ENCODE measurements at regions of chr1 and their contacts with region 1.

Region 1: GRCh38 chr1:92858564-92859399 is 26.9 kb downstream of the RPL5 start:
- DNase-seq: peak; percentile 57
- H3K4me3 Mint-ChIP-seq: no peak overlapping the region
- H3K27ac Mint-ChIP-seq: no peak overlapping the region
- H3K4me1 Mint-ChIP-seq: no peaks in the 10 kb centered on the region
- H3K27me3 Mint-ChIP-seq: no peaks in the 10 kb centered on the region
- CTCF ChIP-seq: peak; percentile 82

Region 2: GRCh38 chr1:92960395-92961130 is 101.8 kb after region 1 on chr1:
- CTCF ChIA-PET with region 1: interaction called, 7 read pairs
- intact Hi-C with region 1: loop called (anchors 1 kb)
- DNase-seq: peak; percentile 64
- H3K4me3 Mint-ChIP-seq: peak overlapping the region; percentile 70
- H3K27ac Mint-ChIP-seq: peak overlapping the region; percentile 31
- H3K4me1 Mint-ChIP-seq: peaks cover 8% of the 10 kb centered on the region
- H3K27me3 Mint-ChIP-seq: no peaks in the 10 kb centered on the region
- CTCF ChIP-seq: peak; percentile 47

Region 3: GRCh38 chr1:92994105-92994712 is 135.4 kb after region 1 on chr1:
- CTCF ChIA-PET with region 1: interaction called, 9 read pairs
- intact Hi-C with region 1: loop called (anchors 1 kb)
- DNase-seq: peak; percentile 62
- H3K4me3 Mint-ChIP-seq: no peak overlapping the region
- H3K27ac Mint-ChIP-seq: no peak overlapping the region
- H3K4me1 Mint-ChIP-seq: peaks cover 19% of the 10 kb centered on the region
- H3K27me3 Mint-ChIP-seq: no peaks in the 10 kb centered on the region
- CTCF ChIP-seq: peak; percentile 72

Region 4: GRCh38 chr1:93061895-93062792 is 203.4 kb after region 1 on chr1:
- CTCF ChIA-PET with region 1: interaction called, 3 read pairs
- intact Hi-C with region 1: loop called (anchors 1 kb)
- DNase-seq: peak; percentile 47
- H3K4me3 Mint-ChIP-seq: no peak overlapping the region
- H3K27ac Mint-ChIP-seq: no peak overlapping the region
- H3K4me1 Mint-ChIP-seq: no peaks in the 10 kb centered on the region
- H3K27me3 Mint-ChIP-seq: peaks cover 13% of the 10 kb centered on the region
- CTCF ChIP-seq: peak; percentile 51

Region 5: GRCh38 chr1:93207211-93207610 is 348.4 kb after region 1 on chr1:
- CTCF ChIA-PET with region 1: no interaction called
- intact Hi-C with region 1: no loop called
- DNase-seq: no peak
- H3K4me3 Mint-ChIP-seq: no peak overlapping the region
- H3K27ac Mint-ChIP-seq: no peak overlapping the region
- H3K4me1 Mint-ChIP-seq: no peaks in the 10 kb centered on the region
- H3K27me3 Mint-ChIP-seq: no peaks in the 10 kb centered on the region
- CTCF ChIP-seq: no peak